Cardiac septum (tissue), 1 donor: ENCODE measurements at regions of chr1 and their contacts with region 1.

Region 1: DNA sequence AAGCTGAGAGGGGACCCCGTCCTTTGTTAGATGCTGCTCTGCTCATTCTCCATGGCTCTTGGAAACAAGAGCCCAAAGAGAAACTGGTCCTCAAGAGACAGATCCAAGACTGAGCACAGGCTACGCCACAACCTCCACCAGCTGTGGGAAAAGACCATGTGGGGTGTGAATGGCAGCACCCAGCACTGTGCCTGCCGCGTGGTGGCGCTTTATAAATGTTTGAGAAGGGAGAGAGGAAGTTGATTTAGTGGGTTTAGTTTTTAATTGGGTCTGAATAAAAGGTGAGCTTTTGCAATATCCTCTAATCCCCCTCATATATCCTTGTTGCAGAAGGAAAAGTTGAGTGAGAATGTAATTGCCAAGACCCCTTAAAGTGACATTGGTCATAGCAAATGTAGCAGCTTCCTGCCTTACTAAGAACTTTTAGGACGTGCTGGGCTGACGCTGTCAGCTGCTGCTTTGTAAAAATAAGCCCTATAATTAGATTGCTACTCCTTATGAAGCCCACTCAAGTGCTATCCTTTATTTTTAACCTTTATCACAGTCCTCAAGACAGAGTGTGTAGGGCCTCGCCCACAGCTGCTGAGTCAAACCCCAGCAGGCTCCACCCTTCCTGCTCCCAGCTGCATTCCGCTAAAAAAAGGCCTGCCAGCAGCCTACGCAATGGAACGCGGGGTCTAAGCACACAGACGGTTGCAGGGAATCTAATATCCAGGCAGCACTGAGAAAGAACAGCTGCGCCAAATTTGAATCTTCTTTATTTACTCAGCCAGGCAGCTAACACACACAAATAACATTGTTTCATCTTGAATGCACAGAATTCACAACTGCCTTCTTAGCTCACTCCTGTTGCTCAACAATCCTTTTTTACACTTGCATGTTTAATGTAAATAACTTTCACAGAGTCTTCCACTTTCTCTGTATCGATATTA is 47.4 kb upstream of the PRDX6 start:
- DNase-seq: peak; percentile 93

Region 2: GRCh38 chr1:173476664-173477285 is 47.0 kb after region 1 on chr1:
- intact Hi-C with region 1: loop called (anchors 1 kb)
- DNase-seq: peak; percentile 96

Region 3: GRCh38 chr1:173714759-173715537 is 285.2 kb after region 1 on chr1 and contains the start of gene KLHL20:
- intact Hi-C with region 1: loop called (anchors 2 kb)
- DNase-seq: peak; percentile 90
- total RNA-seq, gene KLHL20: 17.1 TPM